ENCODE measurements at regions of chr5 and their contacts with region 1.

Region 1: DNA sequence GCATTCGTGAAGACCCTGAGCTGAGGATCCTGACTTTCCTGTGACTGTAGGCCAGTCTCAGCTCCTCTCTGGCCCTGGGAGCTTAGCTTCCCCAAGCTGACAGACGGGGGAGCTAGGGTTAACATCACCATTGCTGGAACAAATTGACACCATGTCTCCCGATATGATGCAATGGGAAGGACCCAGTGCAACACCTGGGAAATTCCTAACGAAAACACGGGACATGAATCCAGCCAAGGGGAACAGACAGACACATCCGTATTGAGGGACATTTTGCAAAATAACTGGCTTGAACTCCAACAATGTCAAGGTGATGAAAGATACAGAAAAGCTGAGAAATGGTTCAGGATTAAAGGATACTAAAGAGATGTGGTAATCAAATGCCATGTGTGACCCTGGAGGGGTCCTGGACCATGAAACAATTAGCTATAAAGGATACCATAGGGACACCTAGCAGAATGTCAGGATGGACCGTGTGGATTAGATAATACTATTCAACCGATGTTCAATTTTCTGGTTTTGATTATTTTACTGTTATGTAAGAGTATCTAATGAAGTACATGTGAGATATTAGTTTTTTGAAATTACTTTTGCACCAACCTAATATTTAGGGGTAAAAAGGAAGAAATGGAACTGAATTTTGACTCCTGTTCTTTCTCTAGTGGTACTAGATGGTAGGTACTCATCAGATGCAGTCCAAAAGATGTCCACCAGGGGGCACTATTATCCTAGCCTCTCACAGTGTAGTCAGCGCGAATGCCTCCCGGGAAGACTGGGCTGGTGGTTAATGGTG is 52.7 kb downstream of the NDST1 start:
- DNase-seq: peak; percentile 85
- ATAC-seq: peak; percentile 80
- H3K4me3 ChIP-seq: no peak overlapping the region
- H3K27ac ChIP-seq: no peak overlapping the region
- H3K4me1 ChIP-seq: 0 out of 2 replicates have a peak, but pooled peaks cover 8% of the 10 kb centered on the region
- H3K27me3 ChIP-seq: no peaks in the 10 kb centered on the region
- CTCF ChIP-seq: peak; percentile 93
- POLR2A ChIP-seq: no peak
- RAD21 ChIP-seq: peak; percentile 96

Region 2: DNA sequence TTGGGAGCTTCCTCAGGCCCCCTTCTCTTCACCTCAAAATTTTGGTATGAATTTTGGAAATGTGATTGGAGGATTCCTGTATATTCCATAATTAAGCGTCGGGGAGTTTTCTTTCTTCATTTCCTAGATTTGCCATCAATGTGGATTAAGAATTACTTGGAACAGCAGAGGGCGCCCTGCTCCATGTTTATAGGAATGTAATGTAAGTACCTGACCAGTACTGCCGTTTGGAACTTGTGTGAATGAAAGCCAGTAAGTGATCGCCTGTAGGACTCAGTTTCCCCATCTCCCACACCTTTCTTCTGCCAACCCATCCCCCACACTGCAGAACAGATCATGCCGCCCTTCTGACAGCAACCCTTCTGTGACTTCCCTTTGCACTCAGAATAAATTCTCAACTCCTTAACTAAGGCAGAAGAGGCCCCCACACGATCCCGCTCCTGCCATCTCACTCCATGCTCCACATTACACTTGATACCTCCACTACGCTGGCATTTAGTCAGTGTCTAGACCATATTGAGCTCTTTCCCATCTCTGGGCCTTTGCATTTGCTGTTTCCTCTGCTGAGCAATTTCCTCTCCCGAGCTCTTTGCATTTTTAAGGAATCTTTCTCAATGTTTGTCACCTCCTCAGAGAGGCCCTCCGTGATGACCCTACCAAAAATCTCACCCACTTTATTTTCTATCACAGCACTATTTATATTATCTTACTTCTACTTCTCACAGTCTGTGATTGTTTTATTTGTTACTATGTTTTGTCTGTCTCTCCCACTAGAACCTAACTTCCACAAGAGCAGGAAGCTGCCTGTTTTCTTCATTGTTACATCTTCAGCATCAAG is 1826.8 kb before region 1 on chr5:
- CTCF ChIA-PET with region 1: no interaction called
- POLR2A ChIA-PET with region 1: no interaction called
- dilution Hi-C with region 1: no loop called
- in situ Hi-C with region 1: no loop called
- intact Hi-C with region 1: no loop called
- DNase-seq: peak; percentile 84
- ATAC-seq: peak; percentile 66
- H3K4me3 ChIP-seq: no peak overlapping the region
- H3K27ac ChIP-seq: no peak overlapping the region
- H3K4me1 ChIP-seq: peaks cover 11% of the 10 kb centered on the region
- H3K27me3 ChIP-seq: no peaks in the 10 kb centered on the region
- CTCF ChIP-seq: peak; percentile 82
- POLR2A ChIP-seq: no peak
- RAD21 ChIP-seq: peak; percentile 84

Region 3: GRCh38 chr5:149799119-149799623 is 761.4 kb before region 1 on chr5:
- CTCF ChIA-PET with region 1: no interaction called
- POLR2A ChIA-PET with region 1: no interaction called
- dilution Hi-C with region 1: no loop called
- in situ Hi-C with region 1: no loop called
- intact Hi-C with region 1: no loop called
- DNase-seq: peak; percentile 90
- ATAC-seq: peak; percentile 87
- H3K4me3 ChIP-seq: no peak overlapping the region
- H3K27ac ChIP-seq: no peak overlapping the region
- H3K4me1 ChIP-seq: peaks cover 7% of the 10 kb centered on the region
- H3K27me3 ChIP-seq: peaks cover 8% of the 10 kb centered on the region; the same call in 1 of the 2 replicates
- CTCF ChIP-seq: no peak
- POLR2A ChIP-seq: no peak
- RAD21 ChIP-seq: no peak

Region 4: DNA sequence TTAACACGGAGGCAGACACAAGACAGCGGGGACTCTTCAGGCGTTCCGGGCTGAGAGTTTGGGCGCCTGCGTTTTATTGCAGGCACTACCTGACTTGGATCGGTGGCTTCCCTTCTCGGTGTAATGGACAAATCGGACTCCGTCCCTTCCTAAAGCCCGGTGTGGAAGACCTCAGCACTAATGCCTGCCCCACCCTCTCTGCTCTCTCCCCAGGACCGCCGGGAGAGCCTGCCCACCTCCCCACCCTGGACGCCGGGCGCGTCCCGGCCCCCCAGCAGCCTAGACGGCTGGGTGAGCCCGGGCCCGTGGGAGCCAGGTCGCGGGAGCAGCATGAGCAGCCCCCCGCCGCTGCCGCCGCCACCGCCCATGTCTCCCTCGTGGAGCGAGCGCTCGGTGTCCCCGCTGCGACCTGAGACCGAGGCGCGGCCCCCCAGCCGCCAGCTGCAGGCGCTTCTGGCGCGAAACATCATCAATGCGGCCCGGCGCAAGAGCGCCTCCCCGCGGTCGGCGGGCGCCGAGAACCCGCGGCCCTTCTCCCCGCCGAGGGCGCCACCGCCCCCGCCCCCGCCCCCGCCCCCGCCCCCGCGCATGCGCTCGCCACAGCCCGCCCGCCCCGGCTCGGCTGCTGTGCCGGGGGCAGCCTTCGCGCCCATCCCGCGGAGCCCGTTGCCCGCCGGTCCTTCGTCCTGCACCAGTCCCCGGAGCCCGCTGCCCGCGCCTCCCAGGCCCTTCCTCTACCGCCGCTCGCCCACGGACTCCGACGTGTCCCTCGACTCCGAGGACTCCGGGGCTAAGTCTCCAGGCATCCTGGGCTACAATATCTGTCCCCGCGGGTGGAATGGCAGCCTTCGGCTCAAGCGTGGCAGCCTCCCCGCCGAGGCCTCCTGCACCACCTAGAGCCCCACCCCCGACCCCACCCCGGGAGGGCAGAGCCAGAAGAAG is 95.9 kb after region 1 on chr5:
- CTCF ChIA-PET with region 1: interaction called, 5 read pairs
- POLR2A ChIA-PET with region 1: interaction called, 3 read pairs
- dilution Hi-C with region 1: no loop called
- in situ Hi-C with region 1: loop called (anchors 5 kb)
- intact Hi-C with region 1: loop called (anchors 1 kb)
- DNase-seq: no peak
- ATAC-seq: peak; percentile 40
- H3K4me3 ChIP-seq: peak overlapping the region; percentile 59
- H3K27ac ChIP-seq: peak overlapping the region; percentile 56; the same call in 1 of the 2 replicates
- H3K4me1 ChIP-seq: peaks cover 40% of the 10 kb centered on the region
- H3K27me3 ChIP-seq: no peaks in the 10 kb centered on the region; the same call in 1 of the 2 replicates
- CTCF ChIP-seq: peak; percentile 65
- POLR2A ChIP-seq: no peak
- RAD21 ChIP-seq: peak; percentile 72

Region 5: GRCh38 chr5:150700594-150701293 is 140.1 kb after region 1 on chr5 and contains the start of gene RBM22:
- CTCF ChIA-PET with region 1: interaction called, 6 read pairs
- POLR2A ChIA-PET with region 1: no interaction called
- dilution Hi-C with region 1: no loop called
- in situ Hi-C with region 1: no loop called
- intact Hi-C with region 1: loop called (anchors 2 kb)
- DNase-seq: peak; percentile 83
- ATAC-seq: peak; percentile 98
- H3K4me3 ChIP-seq: peak within 1 kb of the TSS; percentile 81
- H3K27ac ChIP-seq: peak within 1 kb of the TSS; percentile 94
- H3K4me1 ChIP-seq: peaks cover 3% of the 10 kb centered on the region
- H3K27me3 ChIP-seq: no peaks in the 10 kb centered on the region
- CTCF ChIP-seq: peak; percentile 60
- POLR2A ChIP-seq: peak; percentile 80
- RAD21 ChIP-seq: peak; percentile 10; the same call in 1 of the 2 replicates
- total RNA-seq, gene RBM22: 26.2 and 33.1 TPM in 2 replicates

Region 6: GRCh38 chr5:150778517-150779396 is 218.2 kb after region 1 on chr5 and contains the start of gene SMIM3:
- CTCF ChIA-PET with region 1: no interaction called
- POLR2A ChIA-PET with region 1: no interaction called
- dilution Hi-C with region 1: no loop called
- in situ Hi-C with region 1: no loop called
- intact Hi-C with region 1: loop called (anchors 5 kb)
- DNase-seq: peak; percentile 63
- ATAC-seq: peak; percentile 79
- H3K4me3 ChIP-seq: peak within 1 kb of the TSS; percentile 79
- H3K27ac ChIP-seq: peak within 1 kb of the TSS; percentile 88
- H3K4me1 ChIP-seq: peaks cover 27% of the 10 kb centered on the region
- H3K27me3 ChIP-seq: no peaks in the 10 kb centered on the region
- CTCF ChIP-seq: peak; percentile 48
- POLR2A ChIP-seq: peak; percentile 45; the same call in 1 of the 2 replicates
- RAD21 ChIP-seq: peak; percentile 62
- total RNA-seq, gene SMIM3: 36.1 and 37.5 TPM in 2 replicates

Region 7: DNA sequence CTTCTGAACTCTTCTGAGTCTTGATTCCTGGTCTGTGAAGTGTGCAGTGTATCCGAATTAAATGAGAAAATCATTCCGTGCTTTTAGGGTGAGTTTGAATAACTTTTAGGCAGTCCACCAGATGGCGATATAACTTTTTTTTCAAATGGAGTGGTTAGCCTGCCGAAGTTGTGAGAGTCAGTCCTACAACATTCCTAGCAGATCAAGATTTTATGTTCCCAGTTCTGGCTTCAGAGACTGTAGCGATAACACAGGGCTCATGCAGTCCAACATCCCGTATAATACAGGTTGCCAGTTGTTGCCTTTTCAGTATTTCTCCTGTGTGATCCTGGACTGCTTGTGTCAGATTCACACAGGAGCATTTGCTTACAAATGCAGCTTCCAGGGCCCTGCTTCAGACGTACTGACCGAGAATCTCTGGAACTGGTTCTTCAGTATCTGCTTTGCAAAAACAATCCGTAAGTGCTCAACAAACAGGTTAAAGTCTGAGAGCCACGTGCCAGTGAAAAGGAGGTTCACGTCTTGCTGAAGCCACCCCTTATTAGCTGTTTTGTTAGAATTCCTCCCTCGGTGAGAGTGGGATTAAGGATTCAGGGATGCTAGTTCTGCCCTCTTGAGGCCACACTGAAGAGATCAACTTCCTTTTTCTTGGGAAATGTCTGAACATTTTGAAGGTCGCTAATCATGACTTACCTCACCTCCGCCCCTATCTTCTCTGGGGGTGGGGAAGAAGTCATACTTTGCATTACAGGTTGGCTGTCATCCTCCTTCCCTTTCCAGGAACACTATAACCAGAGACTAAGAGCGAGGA is 240.7 kb after region 1 on chr5:
- CTCF ChIA-PET with region 1: no interaction called
- POLR2A ChIA-PET with region 1: no interaction called
- dilution Hi-C with region 1: no loop called
- in situ Hi-C with region 1: no loop called
- intact Hi-C with region 1: loop called (anchors 5 kb)
- DNase-seq: peak; percentile 77
- ATAC-seq: peak; percentile 93
- H3K4me3 ChIP-seq: peak overlapping the region; percentile 36
- H3K27ac ChIP-seq: peak overlapping the region; percentile 54
- H3K4me1 ChIP-seq: peaks cover 8% of the 10 kb centered on the region
- H3K27me3 ChIP-seq: no peaks in the 10 kb centered on the region
- CTCF ChIP-seq: peak; percentile 66
- POLR2A ChIP-seq: no peak; the same call in 1 of the 2 replicates
- RAD21 ChIP-seq: peak; percentile 53

Region 8: GRCh38 chr5:150846654-150847333 is 286.2 kb after region 1 on chr5:
- CTCF ChIA-PET with region 1: no interaction called
- POLR2A ChIA-PET with region 1: no interaction called
- dilution Hi-C with region 1: no loop called
- in situ Hi-C with region 1: loop called (anchors 5 kb)
- intact Hi-C with region 1: loop called (anchors 1 kb)
- DNase-seq: peak; percentile 88
- ATAC-seq: peak; percentile 97
- H3K4me3 ChIP-seq: no peak overlapping the region
- H3K27ac ChIP-seq: no peak overlapping the region
- H3K4me1 ChIP-seq: no peaks in the 10 kb centered on the region
- H3K27me3 ChIP-seq: peaks cover 12% of the 10 kb centered on the region
- CTCF ChIP-seq: peak; percentile 83
- POLR2A ChIP-seq: 0 out of 2 replicates have a peak, but pooled peaks have one; percentile 26
- RAD21 ChIP-seq: peak; percentile 84

Region 9: DNA sequence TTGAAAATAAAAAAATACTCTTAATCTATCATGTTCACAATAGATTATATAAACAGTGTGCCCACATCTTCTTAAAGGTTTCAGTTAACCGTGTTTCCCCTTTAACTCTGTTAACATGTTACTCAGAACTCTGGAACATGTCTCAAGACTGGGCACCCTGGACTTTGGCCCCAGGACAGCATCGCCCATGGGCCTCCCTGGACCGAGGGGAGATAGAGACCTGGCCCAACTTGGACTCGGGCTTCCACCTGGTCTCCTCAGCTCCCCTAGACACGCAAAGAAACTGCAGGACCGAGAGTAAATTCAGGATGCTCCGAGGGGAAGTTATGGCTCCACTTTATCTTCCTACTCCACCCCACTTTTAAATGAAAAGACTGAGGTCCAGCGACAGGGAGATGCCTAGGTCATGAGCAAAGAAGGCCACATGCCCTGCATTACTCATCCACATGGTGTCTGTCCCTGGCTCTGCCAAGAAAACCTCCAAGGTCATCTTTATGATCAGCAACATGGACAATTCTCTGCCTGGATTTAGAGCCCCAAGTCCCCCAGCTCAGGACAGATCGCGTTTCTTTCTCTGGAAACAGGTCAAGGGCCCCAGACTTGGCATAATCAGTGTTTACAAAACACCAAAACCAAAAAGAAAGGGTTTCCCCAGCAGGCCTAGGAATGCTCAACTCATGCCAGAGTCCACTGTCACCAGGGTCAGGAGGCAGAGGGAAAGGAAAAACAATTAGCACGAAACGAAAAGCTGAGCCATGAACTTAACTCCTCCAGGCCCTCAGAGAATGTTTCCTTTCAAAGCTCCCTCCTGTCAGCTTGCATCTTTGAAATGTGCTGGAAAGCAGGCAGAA is 477.2 kb after region 1 on chr5:
- CTCF ChIA-PET with region 1: no interaction called
- POLR2A ChIA-PET with region 1: no interaction called
- dilution Hi-C with region 1: no loop called
- in situ Hi-C with region 1: no loop called
- intact Hi-C with region 1: no loop called
- DNase-seq: peak; percentile 75
- ATAC-seq: peak; percentile 86
- H3K4me3 ChIP-seq: no peak overlapping the region
- H3K27ac ChIP-seq: peak overlapping the region; percentile 43
- H3K4me1 ChIP-seq: peaks cover 27% of the 10 kb centered on the region
- H3K27me3 ChIP-seq: no peaks in the 10 kb centered on the region
- CTCF ChIP-seq: no peak
- POLR2A ChIP-seq: no peak
- RAD21 ChIP-seq: no peak

Region 10: DNA sequence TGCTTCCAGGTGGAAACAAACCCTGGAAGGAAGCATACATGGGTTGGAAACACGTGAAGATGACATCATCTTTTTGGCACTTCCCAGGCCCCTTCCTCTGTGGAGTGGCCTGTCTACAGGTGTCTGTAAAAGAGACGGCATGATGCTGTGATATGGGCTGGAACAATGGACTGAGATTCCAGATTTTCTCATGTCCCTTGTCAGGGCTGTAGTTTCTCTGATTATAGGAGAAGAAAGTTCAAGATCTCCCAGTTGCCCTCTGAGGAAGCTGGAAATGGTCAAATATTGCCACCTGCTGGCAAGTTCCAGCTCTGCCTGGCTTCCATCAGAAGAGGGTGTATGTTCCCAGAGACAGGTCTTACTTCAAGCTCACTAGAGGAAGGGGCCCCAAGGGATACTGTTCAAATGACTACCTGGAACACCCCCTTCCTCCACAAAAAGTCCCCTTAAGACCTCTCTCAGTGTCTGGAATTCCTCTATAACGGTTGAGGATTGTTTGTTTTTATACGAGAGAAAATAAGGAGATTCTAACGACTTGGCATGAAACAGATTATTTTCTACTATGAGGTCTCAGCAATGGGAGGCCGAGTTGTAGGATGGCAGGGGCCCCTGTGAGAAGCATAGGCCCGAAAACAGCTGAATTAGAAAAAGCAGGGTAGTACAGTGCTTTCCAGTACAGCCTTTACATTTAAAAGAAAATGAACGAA is 604.2 kb after region 1 on chr5:
- CTCF ChIA-PET with region 1: no interaction called
- POLR2A ChIA-PET with region 1: no interaction called
- dilution Hi-C with region 1: no loop called
- in situ Hi-C with region 1: no loop called
- intact Hi-C with region 1: loop called (anchors 10 kb)
- DNase-seq: peak; percentile 76
- ATAC-seq: peak; percentile 91
- H3K4me3 ChIP-seq: no peak overlapping the region
- H3K27ac ChIP-seq: no peak overlapping the region
- H3K4me1 ChIP-seq: no peaks in the 10 kb centered on the region; the same call in 1 of the 2 replicates
- H3K27me3 ChIP-seq: peaks cover 9% of the 10 kb centered on the region; the same call in 1 of the 2 replicates
- CTCF ChIP-seq: peak; percentile 95
- POLR2A ChIP-seq: no peak
- RAD21 ChIP-seq: peak; percentile 93